ENCODE measurements at regions of chr2 and their contacts with region 1.

Region 1: GRCh38 chr2:230762317-230762896 is 49.8 kb downstream of the CAB39 start:
- DNase-seq: peak in 1 of 2 experiments; percentile 10
- H3K4me3 ChIP-seq: no peak overlapping the region
- H3K27ac ChIP-seq: no peak overlapping the region
- H3K4me1 ChIP-seq: peaks cover 0 to 11% (median 5%) of the 10 kb centered on the region in 4 experiments; a peak in 4 of 7 replicates
- H3K27me3 ChIP-seq: no peaks in the 10 kb centered on the region
- CTCF ChIP-seq: peak; percentile 72 to 92 (median 85)
- EP300 ChIP-seq: no peak
- POLR2A ChIP-seq: no peak
- RAD21 ChIP-seq: peak; percentile 52 to 68

Region 2: GRCh38 chr2:230721712-230722111 is 40.7 kb before region 1 on chr2:
- CTCF ChIA-PET with region 1: interaction called, 11 read pairs
- POLR2A ChIA-PET with region 1: interaction called, 3 read pairs
- DNase-seq: no peak
- H3K4me3 ChIP-seq: peak overlapping the region in 2 of 4 experiments; percentile 1 to 45; a peak in 4 of 8 replicates
- H3K27ac ChIP-seq: peak overlapping the region; percentile 25; the same call in 1 of the 2 replicates
- H3K4me1 ChIP-seq: peaks cover 6 to 38% (median 22%) of the 10 kb centered on the region in 4 experiments
- H3K27me3 ChIP-seq: no peaks in the 10 kb centered on the region
- CTCF ChIP-seq: no peak
- EP300 ChIP-seq: no peak
- POLR2A ChIP-seq: no peak
- RAD21 ChIP-seq: no peak

Region 3: DNA sequence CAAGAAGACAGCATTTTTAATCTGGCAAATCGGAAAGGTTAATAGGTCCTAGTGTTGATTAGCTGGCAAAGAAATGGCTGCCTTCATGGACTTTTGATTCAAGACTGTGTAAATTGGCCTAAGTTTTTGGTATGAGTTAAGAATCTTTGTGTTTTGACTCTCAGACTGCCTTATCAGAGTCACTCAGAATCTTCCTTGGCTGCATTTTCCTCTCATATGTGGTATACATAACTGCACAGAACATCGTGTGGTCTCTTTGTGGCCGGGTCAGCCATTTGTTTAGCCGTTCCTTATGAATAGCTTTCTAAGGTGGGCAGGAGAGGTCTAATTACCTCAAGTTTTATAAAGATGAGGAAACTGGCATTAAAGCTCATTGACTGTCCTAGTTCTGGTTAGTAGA is 19.6 kb before region 1 on chr2:
- CTCF ChIA-PET with region 1: interaction called, 13 read pairs
- POLR2A ChIA-PET with region 1: no interaction called
- DNase-seq: no peak
- H3K4me3 ChIP-seq: no peak overlapping the region
- H3K27ac ChIP-seq: no peak overlapping the region
- H3K4me1 ChIP-seq: peaks cover 0 to 2% (median 0%) of the 10 kb centered on the region in 4 experiments; a peak in 1 of 7 replicates
- H3K27me3 ChIP-seq: no peaks in the 10 kb centered on the region
- CTCF ChIP-seq: no peak
- EP300 ChIP-seq: no peak
- POLR2A ChIP-seq: no peak
- RAD21 ChIP-seq: no peak

Region 4: GRCh38 chr2:230781130-230781797 is 18.9 kb after region 1 on chr2:
- CTCF ChIA-PET with region 1: interaction called, 10 read pairs
- POLR2A ChIA-PET with region 1: no interaction called
- DNase-seq: no peak
- H3K4me3 ChIP-seq: no peak overlapping the region
- H3K27ac ChIP-seq: no peak overlapping the region
- H3K4me1 ChIP-seq: peaks cover 0 to 4% (median under 1%) of the 10 kb centered on the region in 4 experiments; a peak in 4 of 7 replicates
- H3K27me3 ChIP-seq: no peaks in the 10 kb centered on the region
- CTCF ChIP-seq: no peak
- EP300 ChIP-seq: no peak
- POLR2A ChIP-seq: no peak
- RAD21 ChIP-seq: no peak

Region 5: GRCh38 chr2:230790981-230791380 is 28.6 kb after region 1 on chr2:
- CTCF ChIA-PET with region 1: interaction called, 11 read pairs
- POLR2A ChIA-PET with region 1: no interaction called
- DNase-seq: no peak
- H3K4me3 ChIP-seq: no peak overlapping the region
- H3K27ac ChIP-seq: no peak overlapping the region
- H3K4me1 ChIP-seq: peaks cover 0 to 3% (median 0%) of the 10 kb centered on the region in 4 experiments; a peak in 1 of 7 replicates
- H3K27me3 ChIP-seq: no peaks in the 10 kb centered on the region
- CTCF ChIP-seq: no peak
- EP300 ChIP-seq: no peak
- POLR2A ChIP-seq: no peak
- RAD21 ChIP-seq: no peak

Region 6: DNA sequence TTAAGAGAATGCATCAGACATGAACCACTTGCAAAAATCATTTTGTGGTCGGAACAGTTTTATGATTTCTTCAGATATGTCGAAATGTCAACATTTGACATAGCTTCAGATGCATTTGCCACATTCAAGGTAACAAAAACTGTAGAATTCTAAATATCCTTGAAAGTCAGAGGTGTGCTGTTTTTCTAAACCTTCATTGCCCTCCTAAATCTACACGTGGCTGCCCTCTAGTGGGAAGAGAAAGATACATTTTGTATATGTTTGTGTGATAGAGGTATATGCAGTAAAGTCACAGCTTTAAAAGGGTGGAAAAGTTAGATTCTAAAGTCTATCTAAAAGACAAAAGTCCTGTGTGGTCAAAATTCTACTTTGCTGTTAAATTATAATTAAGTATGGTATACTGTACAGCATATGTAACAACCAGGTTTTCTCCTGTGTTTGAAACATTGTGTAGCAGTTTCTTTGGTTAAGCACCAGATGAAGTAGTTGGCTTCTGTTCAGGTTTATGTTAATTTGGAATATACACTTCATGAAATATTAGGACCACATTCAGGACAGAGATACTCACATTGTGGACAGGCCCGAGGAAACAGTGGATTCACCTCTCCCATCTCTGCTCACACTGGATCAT is 36.5 kb after region 1 on chr2:
- CTCF ChIA-PET with region 1: interaction called, 28 read pairs
- POLR2A ChIA-PET with region 1: no interaction called
- DNase-seq: no peak
- H3K4me3 ChIP-seq: no peak overlapping the region
- H3K27ac ChIP-seq: no peak overlapping the region
- H3K4me1 ChIP-seq: peaks cover 0 to 1% (median 0%) of the 10 kb centered on the region in 4 experiments; a peak in 1 of 7 replicates
- H3K27me3 ChIP-seq: no peaks in the 10 kb centered on the region
- CTCF ChIP-seq: peak in 2 of 3 experiments; percentile 55 to 62; a peak in 2 of 4 replicates
- EP300 ChIP-seq: no peak
- POLR2A ChIP-seq: no peak
- RAD21 ChIP-seq: peak; percentile 81 to 84